ENCODE measurements at regions of chr2 and their contacts with region 1.

Region 1: DNA sequence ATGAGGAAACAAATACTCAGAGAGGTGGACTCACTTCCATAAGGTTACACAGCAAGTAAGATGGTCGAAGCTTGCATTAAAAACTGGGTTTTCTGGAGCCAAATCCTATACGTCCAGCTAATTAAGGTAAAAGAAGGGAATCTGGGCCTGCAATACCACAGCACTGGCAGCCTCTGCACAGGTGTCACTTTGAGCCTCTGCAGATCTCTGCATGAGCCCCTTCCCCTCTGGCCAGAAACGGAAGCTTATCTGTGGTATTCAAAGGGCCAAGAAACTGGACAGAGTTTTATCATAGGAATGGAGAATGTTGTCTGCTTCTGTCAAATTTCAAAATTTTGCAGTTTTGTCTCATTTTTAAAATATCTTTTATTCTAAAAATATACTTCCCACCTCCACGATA is 76.1 kb downstream of the OSR1 start:
- DNase-seq: no peak
- H3K4me3 ChIP-seq: no peak overlapping the region
- CTCF ChIP-seq: no peak

Region 2: GRCh38 chr2:19230626-19231025 is 51.7 kb before region 1 on chr2:
- in situ Hi-C with region 1: loop called (anchors 5 kb)
- DNase-seq: no peak
- H3K4me3 ChIP-seq: no peak overlapping the region
- CTCF ChIP-seq: no peak

Region 3: DNA sequence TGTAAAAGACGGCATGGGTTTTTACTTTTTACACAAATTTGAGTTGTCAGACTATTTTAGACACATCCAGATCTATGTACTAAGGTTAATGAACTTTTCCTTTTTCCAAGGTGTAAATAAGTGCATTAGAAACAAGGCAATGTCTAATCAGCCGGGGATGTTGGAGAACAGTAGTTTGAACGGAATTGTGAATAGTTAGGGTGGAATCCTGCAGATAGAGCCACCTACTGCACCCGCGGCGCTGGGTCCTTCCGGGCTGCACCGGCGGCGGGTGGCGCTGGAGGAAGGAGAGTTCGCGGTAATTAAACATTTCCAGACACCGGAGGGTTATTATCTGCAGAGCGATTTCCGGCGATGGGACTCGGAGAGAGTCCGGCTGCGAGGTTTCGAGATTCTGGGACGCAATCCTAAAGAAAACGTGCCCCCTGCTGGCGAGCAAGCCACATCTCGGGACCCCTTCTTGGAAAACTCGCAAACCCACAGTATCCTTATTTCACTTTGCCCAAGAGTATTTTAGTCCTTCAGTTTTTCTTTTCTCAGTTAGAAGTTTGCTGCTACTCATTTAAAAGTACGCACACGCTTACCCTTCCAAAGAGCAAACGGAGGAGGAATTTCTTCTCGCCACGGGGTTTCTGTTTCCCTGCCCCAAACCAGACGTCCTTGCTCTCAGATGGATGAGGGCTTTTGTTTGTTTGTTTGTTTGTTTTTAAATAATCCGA is 80.6 kb after region 1 on chr2:
- in situ Hi-C with region 1: no loop called
- DNase-seq: peak; percentile 76
- H3K4me3 ChIP-seq: peak overlapping the region; percentile 58
- CTCF ChIP-seq: peak; percentile 74

Measured in astrocyte of the cerebellum (primary cell).